ENCODE measurements at regions of chr2 and their contacts with region 1.

Region 1: GRCh38 chr2:74529357-74530238 is at the starts of genes AUP1 and HTRA2:
- DNase-seq: peak; percentile 99
- H3K4me3 ChIP-seq: peak within 1 kb of the TSS; percentile 62 to 92 (median 86)
- H3K27ac ChIP-seq: peak within 1 kb of the TSS; percentile 83 to 89 (median 87)
- H3K4me1 ChIP-seq: peaks cover 24 to 42% (median 33%) of the 10 kb centered on the region in 4 donors
- H3K27me3 ChIP-seq: no peaks in the 10 kb centered on the region
- CTCF ChIP-seq: peak in 1 of 3 experiments; percentile 20
- EP300 ChIP-seq: no peak
- POLR2A ChIP-seq: peak; percentile 53
- total RNA-seq, gene AUP1: 83.6 to 95.1 (median 89.6) TPM
- total RNA-seq, gene HTRA2: 29.7 to 37.9 (median 31.9) TPM

Region 2: GRCh38 chr2:74488644-74489481 is 40.7 kb before region 1 on chr2:
- intact Hi-C with region 1: loop called (anchors 5 kb)
- DNase-seq: no peak
- H3K4me3 ChIP-seq: no peak overlapping the region
- H3K27ac ChIP-seq: no peak overlapping the region
- H3K4me1 ChIP-seq: peaks cover 5 to 8% (median 6%) of the 10 kb centered on the region in 4 donors
- H3K27me3 ChIP-seq: no peaks in the 10 kb centered on the region
- CTCF ChIP-seq: no peak
- EP300 ChIP-seq: no peak
- POLR2A ChIP-seq: no peak

Region 3: GRCh38 chr2:74502720-74503505 is 26.7 kb before region 1 on chr2:
- intact Hi-C with region 1: loop called (anchors 2 kb)
- DNase-seq: peak; percentile 96
- H3K4me3 ChIP-seq: peak overlapping the region; percentile 52 to 66 (median 56)
- H3K27ac ChIP-seq: peak overlapping the region; percentile 58 to 77 (median 72)
- H3K4me1 ChIP-seq: peaks cover 52 to 74% (median 68%) of the 10 kb centered on the region in 4 donors
- H3K27me3 ChIP-seq: peaks cover 0 to 81% (median 44%) of the 10 kb centered on the region in 4 donors
- CTCF ChIP-seq: peak in 1 of 3 experiments; percentile 19
- EP300 ChIP-seq: no peak
- POLR2A ChIP-seq: peak; percentile 32

Region 4: GRCh38 chr2:74553892-74554645 is 24.5 kb after region 1 on chr2 and contains the start of gene LOXL3:
- intact Hi-C with region 1: loop called (anchors 1 kb)
- DNase-seq: peak; percentile 95
- H3K4me3 ChIP-seq: peak within 1 kb of the TSS; percentile 72 to 87 (median 80)
- H3K27ac ChIP-seq: peak within 1 kb of the TSS; percentile 90 to 93 (median 92)
- H3K4me1 ChIP-seq: peaks cover 15 to 50% (median 41%) of the 10 kb centered on the region in 4 donors
- H3K27me3 ChIP-seq: no peaks in the 10 kb centered on the region
- CTCF ChIP-seq: no peak
- EP300 ChIP-seq: no peak
- POLR2A ChIP-seq: no peak
- total RNA-seq, gene LOXL3: 7.1 to 8.6 (median 7.7) TPM

Region 5: GRCh38 chr2:74587664-74588277 is 58.2 kb after region 1 on chr2:
- intact Hi-C with region 1: loop called (anchors 5 kb)
- DNase-seq: no peak
- H3K4me3 ChIP-seq: no peak overlapping the region
- H3K27ac ChIP-seq: no peak overlapping the region
- H3K4me1 ChIP-seq: peaks cover 0 to 5% (median 0%) of the 10 kb centered on the region in 4 donors
- H3K27me3 ChIP-seq: peaks cover 0 to 28% (median 0%) of the 10 kb centered on the region in 4 donors
- CTCF ChIP-seq: peak; percentile 71 to 80 (median 73)
- EP300 ChIP-seq: no peak
- POLR2A ChIP-seq: no peak

Region 6: GRCh38 chr2:74779587-74780135 is 250.1 kb after region 1 on chr2:
- intact Hi-C with region 1: no loop called
- DNase-seq: no peak
- H3K4me3 ChIP-seq: no peak overlapping the region
- H3K27ac ChIP-seq: no peak overlapping the region
- H3K4me1 ChIP-seq: peaks cover 0 to 13% (median 12%) of the 10 kb centered on the region in 4 donors
- H3K27me3 ChIP-seq: no peaks in the 10 kb centered on the region
- CTCF ChIP-seq: no peak
- EP300 ChIP-seq: no peak
- POLR2A ChIP-seq: no peak

Measured in esophagus muscularis mucosa (tissue), 4 donors.